Tibial artery (tissue), 4 donors: ENCODE measurements at regions of chr18 and their contacts with region 1.

Region 1: GRCh38 chr18:38284972-38285371 is 719.4 kb upstream of the CELF4 start:
- DNase-seq: no peak
- H3K4me3 ChIP-seq: no peak overlapping the region
- H3K27ac ChIP-seq: no peak overlapping the region
- H3K4me1 ChIP-seq: no peaks in the 10 kb centered on the region
- H3K27me3 ChIP-seq: no peaks in the 10 kb centered on the region
- CTCF ChIP-seq: no peak

Region 2: GRCh38 chr18:38174594-38174993 is 110.4 kb before region 1 on chr18:
- intact Hi-C with region 1: loop called (anchors 10 kb)
- DNase-seq: no peak
- H3K4me3 ChIP-seq: no peak overlapping the region
- H3K27ac ChIP-seq: no peak overlapping the region
- H3K4me1 ChIP-seq: no peaks in the 10 kb centered on the region
- H3K27me3 ChIP-seq: no peaks in the 10 kb centered on the region
- CTCF ChIP-seq: no peak

Region 3: DNA sequence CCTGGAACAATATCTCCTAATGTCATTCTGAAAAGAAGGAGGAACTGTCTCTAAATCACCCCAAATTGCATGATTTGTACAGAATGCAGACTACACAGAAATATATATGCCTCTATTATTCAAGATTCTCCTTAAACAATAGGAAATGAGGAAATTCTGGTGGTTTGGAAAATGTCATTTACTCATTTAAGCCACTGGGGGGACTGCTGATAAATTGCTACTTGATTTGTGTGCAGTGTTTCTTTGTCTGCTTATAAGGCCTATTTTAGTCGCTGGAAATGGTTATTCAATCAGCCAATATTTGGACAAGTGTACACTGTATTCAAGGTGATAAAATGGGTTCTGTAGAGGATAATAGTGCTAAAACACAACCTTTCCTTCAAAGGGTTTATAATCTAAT is 82.5 kb after region 1 on chr18:
- intact Hi-C with region 1: no loop called
- DNase-seq: no peak
- H3K4me3 ChIP-seq: no peak overlapping the region
- H3K27ac ChIP-seq: no peak overlapping the region
- H3K4me1 ChIP-seq: no peaks in the 10 kb centered on the region
- H3K27me3 ChIP-seq: no peaks in the 10 kb centered on the region
- CTCF ChIP-seq: no peak